Gastrocnemius medialis (tissue), 4 donors: ENCODE measurements at regions of chr14 and their contacts with region 1.

Region 1: DNA sequence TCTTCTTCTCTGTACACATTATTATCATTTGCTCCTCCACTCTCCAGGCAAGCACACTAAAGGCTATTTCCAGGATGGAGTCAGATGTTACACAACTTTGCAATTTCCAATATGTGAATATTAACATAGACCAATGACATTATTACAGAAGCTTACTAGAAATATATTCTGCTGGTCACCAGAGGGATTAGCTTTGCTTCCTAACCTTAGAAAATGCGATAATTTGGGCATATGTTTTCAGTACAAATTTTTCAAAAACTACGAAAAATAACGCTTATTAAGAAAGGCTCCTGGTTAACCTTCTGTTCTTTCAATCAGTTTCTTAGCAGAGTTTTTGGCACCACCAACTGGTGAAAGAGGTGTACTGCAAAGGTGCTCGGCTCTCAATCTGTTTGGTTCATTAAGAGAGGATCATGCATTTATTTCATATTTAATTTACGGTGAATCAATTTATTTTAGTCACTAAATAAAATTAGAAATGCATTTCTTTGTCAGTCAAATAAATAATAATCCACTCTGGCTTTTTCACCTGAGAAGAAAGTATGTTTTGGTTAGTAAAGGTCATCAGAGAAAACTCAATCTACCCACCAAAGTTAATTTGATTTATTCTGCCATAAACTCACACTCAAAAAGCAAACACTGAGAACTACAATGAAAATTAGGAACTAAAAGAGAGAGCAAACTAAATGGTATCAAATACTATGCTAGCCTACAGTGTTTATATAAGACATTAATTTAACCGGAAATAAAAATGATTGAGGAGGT is 39.2 kb downstream of the EFCAB11 start:
- DNase-seq: peak; percentile 19 to 40
- ATAC-seq: peak; percentile 73 to 74
- H3K4me3 ChIP-seq: no peak overlapping the region
- H3K27ac ChIP-seq: no peak overlapping the region
- H3K4me1 ChIP-seq: peaks cover 3 to 11% of the 10 kb centered on the region in 2 donors
- H3K27me3 ChIP-seq: no peaks in the 10 kb centered on the region
- CTCF ChIP-seq: peak; percentile 75 to 95 (median 92)
- POLR2A ChIP-seq: no peak

Region 2: DNA sequence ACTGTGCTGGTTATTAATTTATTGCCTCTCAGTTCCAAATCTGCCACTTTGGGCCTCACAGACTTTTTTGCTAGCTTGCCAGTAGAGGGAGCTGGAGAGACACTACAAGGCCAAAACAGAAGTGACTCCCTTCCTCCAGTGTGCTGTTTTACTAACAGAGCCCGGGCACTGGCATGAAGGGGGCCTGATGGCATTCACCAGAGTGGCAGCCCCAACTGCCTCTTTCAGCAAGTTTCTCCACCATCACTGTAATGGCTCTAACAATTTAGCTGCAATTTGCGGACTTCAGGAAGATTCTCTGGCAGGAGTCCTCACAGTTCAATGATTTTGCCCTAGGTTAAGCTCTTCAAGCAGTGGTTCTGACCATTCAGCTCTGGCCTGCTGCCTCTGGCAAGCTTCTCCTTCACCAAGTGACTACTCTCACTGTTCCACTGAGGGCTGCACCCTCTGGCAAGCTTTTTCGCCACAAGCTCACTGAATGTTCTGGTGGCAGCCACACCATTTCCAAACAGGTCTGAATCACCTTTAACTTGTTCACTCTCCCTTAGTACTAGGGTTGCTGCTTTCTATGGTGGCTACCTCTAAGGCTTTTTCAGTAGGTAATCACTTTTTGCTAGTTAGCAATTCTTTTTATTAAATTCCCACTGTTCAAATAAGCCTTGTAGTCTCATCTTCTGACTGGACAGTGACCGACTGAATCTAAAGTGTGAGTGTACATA is 1247.6 kb before region 1 on chr14:
- in situ Hi-C with region 1: loop called in 1 of 4 experiments (anchors 25 kb)
- intact Hi-C with region 1: no loop called
- DNase-seq: peak in 1 of 2 donors; percentile 17
- ATAC-seq: peak; percentile 49 to 50
- H3K4me3 ChIP-seq: no peak overlapping the region
- H3K27ac ChIP-seq: no peak overlapping the region
- H3K4me1 ChIP-seq: no peaks in the 10 kb centered on the region
- H3K27me3 ChIP-seq: no peaks in the 10 kb centered on the region
- CTCF ChIP-seq: peak in 4 of 5 experiments; percentile 26 to 67 (median 52)
- POLR2A ChIP-seq: no peak

Region 3: DNA sequence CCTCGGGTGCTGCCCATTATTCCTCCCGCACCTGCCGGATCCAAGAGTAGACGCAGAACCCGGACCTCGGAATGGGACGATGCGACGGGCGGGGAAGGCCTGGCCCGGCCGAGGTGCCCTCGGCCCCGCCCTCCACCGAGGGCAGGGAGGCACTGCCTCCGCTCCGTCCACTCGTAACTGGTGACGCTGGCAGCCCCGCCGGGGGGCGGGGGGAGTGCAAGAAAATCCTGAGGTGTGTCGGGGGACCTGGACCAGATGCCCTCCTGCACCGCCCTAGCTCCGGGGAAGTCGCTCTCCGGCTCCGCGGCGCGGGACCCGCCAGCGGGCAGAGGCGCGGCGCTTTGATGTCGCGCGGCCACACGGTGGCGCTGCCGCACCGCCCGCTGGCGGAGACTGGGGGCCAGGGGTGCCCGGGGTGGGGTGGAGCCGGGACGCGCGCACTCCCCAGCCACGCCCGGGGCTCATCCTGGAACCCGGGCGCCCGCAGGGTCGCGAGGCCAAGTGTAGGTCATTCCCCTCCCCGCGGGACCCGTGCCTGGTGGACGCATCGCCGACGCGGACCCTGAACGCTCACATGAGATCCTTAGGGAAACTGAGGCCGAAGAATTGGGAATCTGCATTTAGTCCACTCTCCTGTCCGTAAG is 888.1 kb before region 1 on chr14:
- in situ Hi-C with region 1: loop called in 3 of 4 experiments (anchors 5 to 10 kb)
- intact Hi-C with region 1: loop called (anchors 1 kb)
- DNase-seq: peak in 1 of 2 donors; percentile 20
- ATAC-seq: peak; percentile 78 to 83
- H3K4me3 ChIP-seq: peak overlapping the region; percentile 49 to 85 (median 54)
- H3K27ac ChIP-seq: no peak overlapping the region
- H3K4me1 ChIP-seq: no peaks in the 10 kb centered on the region
- H3K27me3 ChIP-seq: peaks cover 4 to 35% (median 19%) of the 10 kb centered on the region in 3 donors
- CTCF ChIP-seq: peak; percentile 73 to 98 (median 89)
- POLR2A ChIP-seq: no peak

Region 4: DNA sequence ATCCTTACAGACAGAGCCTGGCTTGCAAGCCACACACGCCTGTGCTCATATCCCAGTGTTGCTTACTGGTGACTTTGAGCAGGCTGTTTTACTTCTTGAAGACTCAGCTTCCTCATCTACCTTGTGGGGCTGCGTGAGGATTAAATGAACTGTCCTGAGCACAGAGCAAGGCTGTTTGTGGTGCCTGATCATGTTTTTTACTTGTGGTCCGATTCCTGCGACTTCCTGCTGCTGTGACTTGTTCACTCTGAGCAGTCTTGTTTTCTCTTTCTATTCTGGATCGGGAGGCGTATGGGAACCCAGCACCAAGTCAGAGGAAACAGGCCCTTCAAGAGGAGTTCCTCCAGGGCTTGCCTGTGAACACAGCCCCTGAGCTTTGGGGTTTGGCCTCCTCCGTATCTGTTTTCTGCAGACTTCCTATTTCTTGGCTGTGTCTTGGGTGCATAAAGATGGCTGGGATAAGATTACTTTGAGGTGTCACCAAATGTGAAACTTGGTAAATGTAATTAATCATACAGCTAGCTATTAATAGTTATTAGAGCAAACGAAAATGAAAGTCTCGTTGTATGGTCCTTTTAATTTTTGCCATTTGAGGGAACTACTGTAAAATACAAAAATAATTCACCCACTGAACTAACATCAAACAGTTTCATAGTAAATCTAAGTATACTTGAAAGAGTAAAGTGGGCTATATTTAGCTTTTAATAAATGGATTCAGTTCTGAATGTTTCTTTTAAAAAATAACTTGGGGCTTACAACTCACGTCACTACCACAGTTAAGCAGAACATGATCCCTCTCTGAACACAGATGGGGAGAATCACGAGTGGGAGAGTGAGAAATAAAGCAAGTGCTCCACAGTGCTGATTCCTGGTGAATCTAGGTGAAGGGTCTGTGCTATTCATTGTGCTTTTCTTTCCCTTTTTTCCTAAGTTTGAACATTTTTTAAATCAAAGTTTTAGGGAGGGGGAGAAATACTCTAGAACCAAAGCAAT is 749.8 kb before region 1 on chr14:
- in situ Hi-C with region 1: loop called (anchors 10 to 25 kb)
- intact Hi-C with region 1: loop called (anchors 10 kb)
- DNase-seq: no peak
- ATAC-seq: peak; percentile 61 to 67
- H3K4me3 ChIP-seq: peak overlapping the region; percentile 7 to 42 (median 17)
- H3K27ac ChIP-seq: peak overlapping the region; percentile 47 to 69 (median 60)
- H3K4me1 ChIP-seq: peaks cover 41 to 45% of the 10 kb centered on the region in 2 donors
- H3K27me3 ChIP-seq: no peaks in the 10 kb centered on the region
- CTCF ChIP-seq: no peak
- POLR2A ChIP-seq: no peak

Region 5: GRCh38 chr14:89178802-89179535 is 736.3 kb before region 1 on chr14:
- in situ Hi-C with region 1: loop called in 2 of 4 experiments (anchors 10 to 25 kb)
- intact Hi-C with region 1: loop called (anchors 10 kb)
- DNase-seq: no peak
- ATAC-seq: no peak
- H3K4me3 ChIP-seq: no peak overlapping the region
- H3K27ac ChIP-seq: no peak overlapping the region
- H3K4me1 ChIP-seq: peaks cover 32 to 46% of the 10 kb centered on the region in 2 donors
- H3K27me3 ChIP-seq: no peaks in the 10 kb centered on the region
- CTCF ChIP-seq: no peak
- POLR2A ChIP-seq: no peak

Region 6: GRCh38 chr14:89430391-89431236 is 484.7 kb before region 1 on chr14:
- in situ Hi-C with region 1: loop called in 1 of 4 experiments (anchors 25 kb)
- intact Hi-C with region 1: no loop called
- DNase-seq: no peak
- ATAC-seq: no peak
- H3K4me3 ChIP-seq: peak overlapping the region; percentile 14 to 43 (median 34)
- H3K27ac ChIP-seq: peak overlapping the region; percentile 71 to 79 (median 74)
- H3K4me1 ChIP-seq: peaks cover 48 to 56% of the 10 kb centered on the region in 2 donors
- H3K27me3 ChIP-seq: no peaks in the 10 kb centered on the region
- CTCF ChIP-seq: no peak
- POLR2A ChIP-seq: peak in 1 of 2 donors; percentile 10